ENCODE measurements at regions of chr10 and their contacts with region 1.

Region 1: GRCh38 chr10:126081867-126082472 is 185.6 kb downstream of the FANK1 start:
- DNase-seq: no peak
- ATAC-seq: no peak
- H3K4me3 ChIP-seq: no peak overlapping the region
- H3K27ac ChIP-seq: no peak overlapping the region
- H3K4me1 ChIP-seq: no peaks in the 10 kb centered on the region
- H3K27me3 ChIP-seq: no peaks in the 10 kb centered on the region
- CTCF ChIP-seq: no peak

Region 2: DNA sequence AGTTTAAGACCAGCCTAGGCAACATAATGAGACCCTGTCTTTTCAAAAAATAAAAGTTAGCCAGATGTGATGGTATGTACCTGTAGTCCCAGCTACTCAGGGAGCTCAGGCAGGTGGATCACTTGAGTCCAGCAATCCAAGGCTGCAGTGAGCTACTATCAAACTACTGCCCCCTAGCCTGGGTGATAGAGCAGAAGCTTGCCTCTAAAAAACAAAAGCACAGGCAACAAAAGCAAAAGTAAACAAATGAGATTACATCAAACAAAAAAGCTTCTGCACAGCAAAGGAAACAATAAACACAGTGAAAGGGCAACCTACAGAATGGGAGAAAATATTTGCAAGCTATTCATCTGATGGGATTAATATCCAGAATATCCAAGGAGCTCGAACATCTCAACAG is 120.2 kb before region 1 on chr10:
- CTCF ChIA-PET with region 1: no interaction called
- POLR2A ChIA-PET with region 1: no interaction called
- intact Hi-C with region 1: no loop called
- DNase-seq: peak; percentile 3
- ATAC-seq: no peak
- H3K4me3 ChIP-seq: no peak overlapping the region
- H3K27ac ChIP-seq: no peak overlapping the region
- H3K4me1 ChIP-seq: no peaks in the 10 kb centered on the region
- H3K27me3 ChIP-seq: no peaks in the 10 kb centered on the region
- CTCF ChIP-seq: peak; percentile 29; the same call in 1 of the 2 replicates

Region 3: DNA sequence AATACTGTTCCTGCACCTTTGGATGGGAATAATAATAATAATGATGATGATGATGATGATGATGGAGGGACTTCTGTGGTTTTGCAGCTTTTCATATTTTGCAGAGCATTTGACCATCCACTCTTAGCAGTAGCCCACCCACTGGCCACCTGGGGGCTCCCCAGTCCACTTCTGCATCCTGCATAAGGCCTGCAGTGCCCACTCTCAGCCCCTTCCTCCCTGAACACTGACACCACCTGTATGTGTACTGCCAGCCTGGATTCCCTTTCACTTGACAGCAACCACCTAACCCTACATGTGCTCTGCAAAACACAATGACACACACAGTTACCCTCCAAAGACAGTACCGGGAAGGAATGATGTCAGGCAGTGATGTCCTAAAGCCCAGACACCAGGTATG is 174.9 kb after region 1 on chr10:
- CTCF ChIA-PET with region 1: interaction called, 10 read pairs
- POLR2A ChIA-PET with region 1: no interaction called
- intact Hi-C with region 1: no loop called
- DNase-seq: no peak
- ATAC-seq: no peak
- H3K4me3 ChIP-seq: no peak overlapping the region
- H3K27ac ChIP-seq: no peak overlapping the region
- H3K4me1 ChIP-seq: peaks cover 36% of the 10 kb centered on the region
- H3K27me3 ChIP-seq: no peaks in the 10 kb centered on the region
- CTCF ChIP-seq: no peak